Activated CD8-positive, alpha-beta T cell treated with anti-CD3 and anti-CD28 coated beads, Interleukin-2, amount 10 ng/mL, durations not matched to agents 7 days and 5 days (primary cell): ENCODE measurements at regions of chr1 and their contacts with region 1.

Region 1: GRCh38 chr1:203625628-203626019 is 1.0 kb upstream of the ATP2B4 start:
- DNase-seq: peak; percentile 79
- ATAC-seq: peak; percentile 38
- H3K4me3 Mint-ChIP-seq: peak overlapping the region; percentile 90
- H3K27ac Mint-ChIP-seq: peak overlapping the region; percentile 71
- H3K4me1 Mint-ChIP-seq: peaks cover 61% of the 10 kb centered on the region
- H3K27me3 Mint-ChIP-seq: no peaks in the 10 kb centered on the region

Region 2: DNA sequence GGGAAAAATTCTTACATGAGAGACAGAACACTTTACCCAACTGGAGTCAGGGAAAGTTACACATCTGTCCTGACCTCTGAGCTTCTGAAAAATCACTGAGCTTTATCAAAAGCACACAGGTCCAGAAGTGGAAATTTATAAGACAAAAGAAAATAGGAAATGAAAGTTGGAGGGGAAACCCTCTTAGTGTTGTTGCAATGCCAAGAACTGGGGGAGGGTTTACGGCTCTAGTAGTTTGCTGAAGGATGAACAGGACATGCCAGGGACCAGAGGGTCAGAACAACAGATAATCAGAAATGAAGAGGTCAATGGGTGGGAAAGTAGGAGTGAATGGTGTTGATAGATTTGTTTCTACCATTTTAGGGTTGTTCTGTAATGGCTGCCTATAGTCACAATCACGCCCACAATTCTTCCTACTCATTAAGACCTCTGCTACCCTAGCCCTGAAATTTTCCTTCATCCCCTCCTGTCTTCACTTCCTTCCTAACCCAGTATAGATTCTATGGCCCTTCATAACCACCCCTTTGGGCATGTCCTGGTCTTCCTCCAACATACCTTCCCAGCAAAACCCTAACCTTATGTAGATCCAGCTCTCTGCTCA is 244.4 kb before region 1 on chr1:
- CTCF ChIA-PET with region 1: no interaction called
- POLR2A ChIA-PET with region 1: no interaction called
- DNase-seq: no peak
- ATAC-seq: no peak
- H3K4me3 Mint-ChIP-seq: no peak overlapping the region
- H3K27ac Mint-ChIP-seq: no peak overlapping the region
- H3K4me1 Mint-ChIP-seq: no peaks in the 10 kb centered on the region
- H3K27me3 Mint-ChIP-seq: peaks cover 28% of the 10 kb centered on the region

Region 3: DNA sequence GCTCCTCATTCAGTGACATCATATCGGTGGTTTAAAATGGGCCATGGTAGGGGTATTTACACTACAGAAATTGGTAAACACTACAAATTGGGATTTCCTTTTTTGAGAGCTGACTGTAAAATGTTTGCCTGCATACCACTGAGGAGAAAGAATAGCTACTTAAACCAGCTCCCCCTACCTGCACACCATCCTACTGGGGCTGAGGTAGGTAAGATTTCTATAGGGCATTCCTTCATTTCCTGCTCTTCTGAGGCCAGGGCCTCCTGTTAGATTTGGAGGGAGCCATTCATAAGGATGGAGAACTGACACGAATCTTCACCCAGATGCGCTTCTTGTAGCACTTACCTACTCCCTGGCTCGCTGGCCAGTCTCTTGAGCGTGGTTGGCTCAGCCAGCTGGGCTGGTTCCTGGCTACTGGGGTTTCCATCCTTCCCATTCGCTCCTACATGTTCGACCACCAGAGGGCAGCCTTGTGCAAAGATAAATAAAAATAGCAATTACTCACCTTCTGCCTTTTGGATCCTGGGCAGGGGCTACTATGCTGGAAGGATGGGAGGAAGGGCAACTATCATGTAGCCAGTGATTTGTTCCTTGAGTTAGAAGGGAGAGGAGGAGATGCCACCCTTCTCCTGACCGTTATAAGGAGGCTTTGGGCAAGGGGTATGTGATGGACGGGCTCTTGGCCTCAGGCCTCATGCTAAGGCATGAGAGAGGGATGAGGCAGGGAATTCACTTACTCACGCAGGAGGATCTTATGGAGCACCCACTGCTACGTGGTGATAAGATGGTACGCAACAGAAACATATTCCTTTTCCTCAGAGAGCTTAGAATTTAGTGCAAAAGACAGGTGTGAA is 121.0 kb before region 1 on chr1:
- CTCF ChIA-PET with region 1: interaction called, 13 read pairs
- POLR2A ChIA-PET with region 1: interaction called, 5 read pairs
- DNase-seq: peak; percentile 85
- ATAC-seq: peak; percentile 83
- H3K4me3 Mint-ChIP-seq: no peak overlapping the region
- H3K27ac Mint-ChIP-seq: no peak overlapping the region
- H3K4me1 Mint-ChIP-seq: peaks cover 6% of the 10 kb centered on the region
- H3K27me3 Mint-ChIP-seq: peaks cover 5% of the 10 kb centered on the region

Region 4: DNA sequence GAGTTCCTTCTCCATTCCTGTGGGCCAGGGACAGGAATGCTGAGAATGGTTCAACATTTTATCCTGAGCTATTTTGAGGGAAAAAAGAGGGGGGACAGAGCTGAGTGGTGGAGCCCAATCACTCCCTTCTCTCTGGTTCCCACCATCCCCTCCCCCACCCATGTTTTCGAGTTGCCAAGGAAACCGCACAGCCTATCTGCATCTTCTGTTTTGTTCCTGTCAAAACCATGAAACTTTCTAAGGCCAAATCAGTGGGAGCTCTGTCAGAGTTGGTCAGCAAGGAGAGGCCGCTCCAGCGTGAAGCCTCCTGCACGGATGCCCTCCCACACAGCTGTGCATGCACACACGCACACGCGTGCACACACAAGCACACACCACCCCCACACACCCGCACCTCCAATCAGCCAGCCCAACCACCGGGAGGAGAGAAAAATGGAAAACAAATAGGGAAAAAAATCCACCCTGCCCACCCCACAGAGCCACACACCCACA is 53.4 kb before region 1 on chr1:
- CTCF ChIA-PET with region 1: no interaction called
- POLR2A ChIA-PET with region 1: no interaction called
- DNase-seq: no peak
- ATAC-seq: no peak
- H3K4me3 Mint-ChIP-seq: no peak overlapping the region
- H3K27ac Mint-ChIP-seq: no peak overlapping the region
- H3K4me1 Mint-ChIP-seq: no peaks in the 10 kb centered on the region
- H3K27me3 Mint-ChIP-seq: peaks cover 7% of the 10 kb centered on the region

Region 5: GRCh38 chr1:203603940-203604591 is 21.6 kb before region 1 on chr1:
- CTCF ChIA-PET with region 1: interaction called, 27 read pairs
- POLR2A ChIA-PET with region 1: interaction called, 13 read pairs
- DNase-seq: no peak
- ATAC-seq: no peak
- H3K4me3 Mint-ChIP-seq: no peak overlapping the region
- H3K27ac Mint-ChIP-seq: no peak overlapping the region
- H3K4me1 Mint-ChIP-seq: peaks cover 52% of the 10 kb centered on the region
- H3K27me3 Mint-ChIP-seq: no peaks in the 10 kb centered on the region

Region 6: DNA sequence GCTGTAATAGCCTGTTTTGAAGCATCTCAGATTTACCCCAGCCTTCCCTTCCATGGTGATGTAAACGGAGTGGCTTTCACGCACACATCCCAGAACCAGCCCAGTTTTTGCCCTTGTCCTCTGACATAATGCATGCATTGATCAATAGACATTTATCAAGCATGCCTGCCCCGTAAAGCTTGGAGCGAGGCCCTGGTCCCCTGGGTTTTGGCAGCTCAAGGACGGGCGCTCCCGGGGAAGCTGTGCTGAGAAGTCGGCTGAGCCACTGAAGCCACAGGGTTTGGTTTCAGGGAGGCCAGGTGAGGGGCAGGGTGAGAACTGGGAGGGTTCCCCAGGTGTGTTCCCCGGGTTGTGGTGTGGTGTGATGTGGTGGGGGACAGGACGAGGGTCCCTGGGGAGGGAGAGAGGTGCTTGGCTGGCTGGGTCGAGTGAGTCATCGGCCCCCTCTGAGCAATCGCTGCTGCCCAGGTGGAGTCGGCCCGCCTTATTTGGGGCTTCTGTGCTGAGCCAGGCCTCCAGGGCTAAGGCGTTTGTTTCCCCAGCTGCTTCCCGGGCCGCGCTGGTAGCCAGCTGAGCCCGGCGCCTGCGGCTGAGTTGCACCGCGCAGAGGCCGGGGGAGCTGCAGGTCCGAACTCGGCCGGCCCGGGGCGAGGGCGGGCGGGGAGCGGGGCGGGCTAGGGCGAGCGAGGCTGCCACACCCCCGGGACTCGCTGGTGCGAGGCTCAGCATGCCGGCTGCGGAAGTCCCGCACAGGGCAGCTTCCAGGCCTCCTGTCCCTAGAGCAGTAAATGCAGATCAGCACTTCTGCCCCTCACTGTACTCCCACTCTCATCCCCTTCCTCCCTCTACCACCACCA is 24.6 kb after region 1 on chr1:
- CTCF ChIA-PET with region 1: interaction called, 49 read pairs
- POLR2A ChIA-PET with region 1: interaction called, 14 read pairs
- DNase-seq: peak; percentile 70
- ATAC-seq: peak; percentile 76
- H3K4me3 Mint-ChIP-seq: peak overlapping the region; percentile 63
- H3K27ac Mint-ChIP-seq: peak overlapping the region; percentile 76
- H3K4me1 Mint-ChIP-seq: peaks cover 77% of the 10 kb centered on the region
- H3K27me3 Mint-ChIP-seq: no peaks in the 10 kb centered on the region

Region 7: GRCh38 chr1:203682473-203683383 is 57.1 kb after region 1 on chr1:
- CTCF ChIA-PET with region 1: interaction called, 15 read pairs
- POLR2A ChIA-PET with region 1: interaction called, 7 read pairs
- DNase-seq: peak; percentile 82
- ATAC-seq: peak; percentile 94
- H3K4me3 Mint-ChIP-seq: no peak overlapping the region
- H3K27ac Mint-ChIP-seq: peak overlapping the region; percentile 72
- H3K4me1 Mint-ChIP-seq: peaks cover 35% of the 10 kb centered on the region
- H3K27me3 Mint-ChIP-seq: no peaks in the 10 kb centered on the region

Region 8: DNA sequence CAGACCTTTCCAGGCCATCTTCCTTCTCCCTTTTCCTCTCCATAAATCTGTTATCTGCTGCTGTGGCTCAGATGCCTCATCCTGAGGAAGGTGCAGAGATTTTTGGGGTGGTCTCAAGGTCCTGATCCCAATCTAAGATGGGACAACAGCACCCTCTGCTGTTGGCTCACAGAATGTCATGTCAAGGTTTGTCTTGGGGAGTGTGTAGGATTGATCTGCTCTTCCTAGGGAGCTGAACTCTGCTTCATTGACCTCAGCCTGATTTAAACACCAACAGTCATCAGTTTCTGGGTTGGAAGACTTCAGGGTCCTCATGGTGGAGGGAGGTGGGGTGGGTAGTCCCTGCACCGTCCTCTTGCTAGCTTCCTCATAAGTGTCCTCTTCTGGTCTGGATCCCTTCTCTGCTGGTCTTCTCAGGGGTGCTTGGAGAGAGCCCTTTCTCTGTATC is 76.5 kb after region 1 on chr1:
- CTCF ChIA-PET with region 1: interaction called, 114 read pairs
- POLR2A ChIA-PET with region 1: interaction called, 11 read pairs
- DNase-seq: peak; percentile 73
- ATAC-seq: peak; percentile 70
- H3K4me3 Mint-ChIP-seq: no peak overlapping the region
- H3K27ac Mint-ChIP-seq: peak overlapping the region; percentile 63
- H3K4me1 Mint-ChIP-seq: peaks cover 30% of the 10 kb centered on the region
- H3K27me3 Mint-ChIP-seq: no peaks in the 10 kb centered on the region